ENCODE measurements at regions of chr4 and their contacts with region 1.

Region 1: GRCh38 chr4:122930862-122931261 is 8.5 kb upstream of the NUDT6 start:
- DNase-seq: no peak
- H3K4me3 Mint-ChIP-seq: no peak overlapping the region
- H3K27ac Mint-ChIP-seq: no peak overlapping the region
- H3K4me1 Mint-ChIP-seq: peaks cover 48% of the 10 kb centered on the region
- H3K27me3 Mint-ChIP-seq: no peaks in the 10 kb centered on the region

Region 2: GRCh38 chr4:122716825-122717448 is 213.9 kb before region 1 on chr4:
- CTCF ChIA-PET with region 1: interaction called, 11 read pairs
- POLR2A ChIA-PET with region 1: no interaction called
- DNase-seq: peak; percentile 77
- H3K4me3 Mint-ChIP-seq: no peak overlapping the region
- H3K27ac Mint-ChIP-seq: no peak overlapping the region
- H3K4me1 Mint-ChIP-seq: peaks cover 29% of the 10 kb centered on the region
- H3K27me3 Mint-ChIP-seq: no peaks in the 10 kb centered on the region

Region 3: DNA sequence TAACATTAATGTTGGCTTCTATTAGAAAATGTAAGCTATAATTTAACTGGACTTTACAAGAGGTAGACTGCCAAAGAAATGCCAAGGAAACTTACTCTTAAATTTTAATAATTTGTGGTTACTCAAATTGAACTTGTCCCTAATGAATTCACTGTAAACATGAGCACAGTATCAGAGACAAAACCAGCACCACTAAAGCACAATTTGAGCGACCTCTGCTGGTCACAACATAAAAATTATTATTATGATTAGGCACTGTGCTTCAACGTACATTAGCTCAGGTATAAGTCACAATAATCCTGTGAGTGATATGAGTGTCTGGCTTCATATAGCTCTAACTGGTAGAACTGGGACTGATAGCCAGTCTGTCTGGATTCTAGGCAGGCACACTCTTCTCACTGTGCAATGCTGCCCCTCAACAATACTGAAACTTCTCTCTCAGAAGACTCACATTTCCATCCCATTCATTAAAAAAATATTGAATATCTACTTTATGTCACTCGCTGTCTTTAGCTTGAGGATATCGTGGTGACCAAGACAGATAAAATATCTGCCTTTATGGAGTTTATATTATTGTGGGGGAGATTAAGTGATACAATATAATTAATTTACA is 16.5 kb before region 1 on chr4:
- CTCF ChIA-PET with region 1: interaction called, 17 read pairs
- POLR2A ChIA-PET with region 1: no interaction called
- DNase-seq: no peak
- H3K4me3 Mint-ChIP-seq: no peak overlapping the region
- H3K27ac Mint-ChIP-seq: no peak overlapping the region
- H3K4me1 Mint-ChIP-seq: peaks cover 3% of the 10 kb centered on the region
- H3K27me3 Mint-ChIP-seq: no peaks in the 10 kb centered on the region

Region 4: GRCh38 chr4:122963216-122963615 is 32.4 kb after region 1 on chr4:
- CTCF ChIA-PET with region 1: no interaction called
- POLR2A ChIA-PET with region 1: no interaction called
- DNase-seq: no peak
- H3K4me3 Mint-ChIP-seq: no peak overlapping the region
- H3K27ac Mint-ChIP-seq: peak overlapping the region; percentile 5
- H3K4me1 Mint-ChIP-seq: peaks cover 10% of the 10 kb centered on the region
- H3K27me3 Mint-ChIP-seq: no peaks in the 10 kb centered on the region